ENCODE measurements at regions of chr17 and their contacts with region 1.

Region 1: DNA sequence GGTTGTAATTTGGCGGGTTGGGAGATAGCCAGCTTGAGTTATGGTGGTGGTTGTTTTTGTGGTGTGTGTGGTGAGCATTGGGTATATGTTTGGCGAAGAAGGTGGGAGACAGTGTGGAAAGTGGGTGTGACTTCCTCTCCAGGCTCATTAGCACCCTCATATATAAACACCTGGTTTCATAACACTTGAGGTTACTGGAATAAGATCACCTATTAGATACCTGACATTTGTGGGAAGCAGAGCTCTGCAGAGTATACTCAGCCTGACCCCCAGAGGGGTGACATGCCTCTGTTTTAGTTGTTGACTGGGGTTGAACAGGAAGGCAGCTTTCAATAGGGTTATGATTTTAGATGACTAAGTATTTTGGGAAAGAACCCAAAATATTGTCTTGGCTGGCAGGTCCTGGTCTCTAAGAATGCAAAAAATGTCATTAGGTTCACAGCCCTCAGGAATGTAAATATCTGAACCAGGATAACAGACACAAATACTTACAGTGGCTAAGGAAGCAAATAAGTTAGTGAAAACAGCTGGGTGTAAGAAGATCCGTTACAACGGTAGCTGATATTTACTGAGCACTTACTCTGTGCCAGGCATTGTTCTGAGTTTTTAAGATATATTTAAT is 18.3 kb upstream of the EFCAB13 start:
- DNase-seq: peak; percentile 77 to 100
- H3K4me3 ChIP-seq: no peak overlapping the region
- H3K27ac ChIP-seq: peak overlapping the region; percentile 88
- H3K4me1 ChIP-seq: peaks cover 55% of the 10 kb centered on the region
- H3K27me3 ChIP-seq: no peaks in the 10 kb centered on the region
- CTCF ChIP-seq: no peak

Region 2: DNA sequence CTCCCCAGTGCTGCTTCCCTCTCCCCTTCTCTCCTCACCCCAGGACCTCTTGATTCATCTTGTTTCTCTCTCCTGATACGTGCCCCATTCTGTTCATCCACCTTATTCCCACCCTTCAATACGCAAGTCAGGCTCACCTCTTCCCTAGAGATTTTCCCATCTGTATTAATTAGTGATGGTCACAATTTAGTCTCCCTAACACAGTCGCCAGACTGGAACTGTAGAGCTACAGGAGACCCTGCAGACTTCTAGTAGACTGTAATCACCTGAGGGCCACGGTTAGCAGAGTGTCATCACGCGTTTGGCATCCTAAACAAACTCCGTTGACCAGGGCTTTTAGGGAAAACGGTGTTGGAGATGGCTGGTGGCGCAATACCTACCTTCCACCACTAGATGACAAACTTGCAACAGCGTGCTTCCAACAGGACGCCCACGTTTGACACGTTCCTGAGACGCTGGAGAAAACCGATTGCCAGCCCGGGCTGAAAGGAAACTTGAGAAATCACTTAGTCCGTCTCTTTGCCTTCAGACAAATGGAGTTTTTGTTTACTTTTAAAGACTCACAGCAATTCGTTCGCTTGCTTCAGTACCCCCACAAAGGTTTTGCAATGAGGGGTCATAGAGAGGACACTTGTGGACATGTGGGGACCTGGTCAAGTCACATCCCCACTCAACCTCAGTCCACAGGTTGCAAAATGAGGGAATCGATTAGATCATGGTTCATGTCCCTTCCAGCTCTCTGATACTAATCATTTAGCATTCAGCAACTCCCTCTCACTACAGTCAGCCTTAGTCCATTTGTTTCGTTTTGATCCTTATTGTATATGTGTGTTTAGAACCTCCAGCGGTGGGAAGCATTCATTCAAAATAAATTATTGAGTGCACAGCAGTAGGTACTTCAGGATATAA is 75.6 kb before region 1 on chr17:
- CTCF ChIA-PET with region 1: no interaction called
- POLR2A ChIA-PET with region 1: no interaction called
- intact Hi-C with region 1: loop called (anchors 2 kb)
- DNase-seq: peak; percentile 80 to 98
- H3K4me3 ChIP-seq: peak overlapping the region; percentile 36; the same call in 1 of the 2 replicates
- H3K27ac ChIP-seq: peak overlapping the region; percentile 90
- H3K4me1 ChIP-seq: peaks cover 43% of the 10 kb centered on the region
- H3K27me3 ChIP-seq: no peaks in the 10 kb centered on the region
- CTCF ChIP-seq: peak; percentile 98

Region 3: GRCh38 chr17:47239619-47240374 is 65.6 kb before region 1 on chr17:
- CTCF ChIA-PET with region 1: no interaction called
- POLR2A ChIA-PET with region 1: no interaction called
- intact Hi-C with region 1: loop called (anchors 1 kb)
- DNase-seq: peak; percentile 87 to 97
- H3K4me3 ChIP-seq: no peak overlapping the region
- H3K27ac ChIP-seq: peak overlapping the region; percentile 79
- H3K4me1 ChIP-seq: peaks cover 29% of the 10 kb centered on the region
- H3K27me3 ChIP-seq: no peaks in the 10 kb centered on the region
- CTCF ChIP-seq: no peak

Region 4: GRCh38 chr17:47279062-47279736 is 26.2 kb before region 1 on chr17:
- CTCF ChIA-PET with region 1: interaction called, 3 read pairs
- POLR2A ChIA-PET with region 1: interaction called, 7 read pairs
- intact Hi-C with region 1: loop called (anchors 1 kb)
- DNase-seq: peak; percentile 75 to 99
- H3K4me3 ChIP-seq: no peak overlapping the region
- H3K27ac ChIP-seq: peak overlapping the region; percentile 87
- H3K4me1 ChIP-seq: peaks cover 70% of the 10 kb centered on the region
- H3K27me3 ChIP-seq: no peaks in the 10 kb centered on the region
- CTCF ChIP-seq: no peak

Region 5: DNA sequence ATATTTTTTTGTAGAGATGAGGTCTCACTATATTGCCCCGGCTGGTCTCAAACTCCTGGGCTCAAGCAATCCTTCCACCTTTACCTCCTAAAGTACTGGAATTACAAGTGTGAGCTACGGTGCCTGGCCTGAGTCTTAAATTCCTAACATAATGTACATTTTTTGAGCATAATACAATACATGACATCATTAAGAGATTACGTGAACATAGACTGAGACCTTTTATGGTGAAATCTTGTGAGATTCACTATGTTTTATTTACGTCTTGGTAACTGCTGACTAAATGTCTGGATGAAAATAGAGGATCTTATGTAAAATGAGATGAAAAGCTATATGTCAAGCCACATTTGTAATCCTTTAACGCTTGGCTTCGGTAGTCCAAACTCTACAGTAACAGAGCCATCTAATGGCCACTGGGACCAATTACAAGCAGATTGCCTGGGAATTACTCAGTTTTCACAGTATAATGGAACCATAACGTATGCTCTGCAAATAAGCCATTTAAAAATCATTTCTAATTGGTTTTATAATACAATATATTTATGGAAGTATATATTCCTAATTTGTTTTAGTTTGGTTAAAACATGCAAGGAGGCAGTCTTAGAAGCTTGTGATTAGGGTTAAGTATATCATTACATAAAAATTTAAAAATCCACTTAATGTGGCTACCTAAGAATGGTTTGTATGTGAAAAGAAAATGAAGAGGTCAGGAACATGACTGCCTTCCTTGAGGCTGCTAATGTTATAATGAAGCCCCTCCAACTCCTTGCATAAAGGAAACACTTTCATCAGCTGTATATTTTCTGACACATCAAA is 10.2 kb after region 1 on chr17:
- CTCF ChIA-PET with region 1: interaction called, 4 read pairs
- POLR2A ChIA-PET with region 1: interaction called, 11 read pairs
- intact Hi-C with region 1: no loop called
- DNase-seq: peak in 1 of 2 experiments; percentile 87
- H3K4me3 ChIP-seq: no peak overlapping the region
- H3K27ac ChIP-seq: peak overlapping the region; percentile 73
- H3K4me1 ChIP-seq: peaks cover 39% of the 10 kb centered on the region
- H3K27me3 ChIP-seq: no peaks in the 10 kb centered on the region
- CTCF ChIP-seq: peak; percentile 97